Right ventricle myocardium superior (tissue), 1 donor: ENCODE measurements at regions of chr5 and their contacts with region 1.

Region 1: DNA sequence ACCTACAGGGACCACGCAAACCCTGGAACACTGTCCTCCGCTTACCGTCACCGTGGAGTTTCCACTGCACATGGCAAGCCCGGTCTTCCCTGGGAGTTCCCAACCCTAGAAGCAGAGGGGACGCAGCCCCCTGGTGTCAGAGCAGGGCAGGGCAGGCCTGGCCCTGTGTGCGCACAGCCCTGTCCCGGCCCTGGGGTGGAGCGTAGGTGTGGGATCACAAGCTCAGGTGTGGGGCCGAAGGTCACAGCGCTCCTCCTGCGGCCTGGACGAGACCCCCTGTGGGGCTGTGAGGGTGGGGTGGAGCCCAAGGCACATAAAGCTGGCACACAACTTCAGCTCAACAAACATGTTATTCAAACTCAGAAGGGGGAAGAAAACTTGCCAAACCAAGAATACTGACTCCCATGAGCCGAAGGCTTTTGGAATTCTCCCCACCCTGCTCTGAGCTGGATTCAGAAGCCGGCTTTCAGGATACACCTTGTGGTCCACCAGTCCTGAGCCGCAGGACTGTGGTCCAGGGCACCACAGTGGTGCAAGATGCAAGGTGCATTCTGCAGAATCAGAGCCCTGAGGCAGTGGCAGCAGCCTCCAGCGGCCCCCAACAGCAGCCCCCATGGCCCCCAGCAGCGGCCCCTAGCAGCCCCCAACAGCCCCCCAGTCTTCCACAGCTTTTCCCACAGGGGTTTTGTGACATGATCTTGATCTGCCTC is 11.8 kb upstream of the EXOC3 start:
- DNase-seq: peak; percentile 63
- ATAC-seq: peak; percentile 78

Region 2: GRCh38 chr5:317086-317811 is 113.9 kb before region 1 on chr5:
- intact Hi-C with region 1: loop called (anchors 10 kb)
- DNase-seq: no peak
- ATAC-seq: peak; percentile 47